Activated B cell treated with CpG ODN at 0.5 μM for 24 hours (primary cell): ENCODE measurements at regions of chr10 and their contacts with region 1.

Region 1: DNA sequence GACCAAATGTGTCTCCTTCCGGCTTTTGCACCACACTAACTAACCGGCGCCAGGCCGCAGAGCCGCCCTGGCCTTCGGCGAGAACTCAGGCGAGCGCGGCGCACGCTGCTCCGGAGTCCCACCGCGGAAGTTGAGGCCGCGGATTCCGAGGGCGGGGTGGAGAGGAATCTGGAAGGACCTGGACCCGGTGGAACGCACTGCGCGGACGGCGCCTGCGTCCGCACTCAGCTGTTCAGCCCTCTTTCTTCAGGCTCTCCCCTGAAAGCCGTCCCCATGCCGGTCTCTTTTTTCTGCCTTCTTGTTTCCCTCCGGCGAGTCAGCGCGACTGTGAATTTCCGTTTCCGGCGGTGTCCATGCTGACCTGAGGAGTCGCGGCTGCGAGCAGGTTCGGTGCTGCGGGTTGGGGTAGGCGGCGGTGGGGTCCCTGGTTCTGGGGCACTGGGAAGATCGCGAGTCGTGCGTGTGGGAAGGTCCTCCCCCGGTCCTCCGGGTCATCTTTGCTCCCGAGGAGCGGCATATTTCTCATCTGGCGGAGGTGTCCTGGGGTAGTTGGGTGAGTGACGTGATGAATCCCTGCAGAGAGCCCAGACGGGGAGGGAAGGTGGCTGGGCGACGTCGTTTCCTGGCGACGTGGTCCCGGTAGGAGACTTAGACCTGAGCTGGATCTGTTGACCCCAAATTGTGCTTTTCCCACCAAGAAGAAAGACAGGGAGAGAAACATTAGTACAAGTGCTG is at the start of gene BMS1:
- DNase-seq: peak; percentile 84
- ATAC-seq: peak; percentile 88
- H3K4me3 Mint-ChIP-seq: peak within 1 kb of the TSS; percentile 98
- H3K27ac Mint-ChIP-seq: peak within 1 kb of the TSS; percentile 89
- H3K4me1 Mint-ChIP-seq: peaks cover 21% of the 10 kb centered on the region
- H3K27me3 Mint-ChIP-seq: peaks cover 7% of the 10 kb centered on the region
- CTCF ChIP-seq: no peak
- total RNA-seq, gene BMS1: 24.6 and 25.1 TPM in 2 replicates

Region 2: DNA sequence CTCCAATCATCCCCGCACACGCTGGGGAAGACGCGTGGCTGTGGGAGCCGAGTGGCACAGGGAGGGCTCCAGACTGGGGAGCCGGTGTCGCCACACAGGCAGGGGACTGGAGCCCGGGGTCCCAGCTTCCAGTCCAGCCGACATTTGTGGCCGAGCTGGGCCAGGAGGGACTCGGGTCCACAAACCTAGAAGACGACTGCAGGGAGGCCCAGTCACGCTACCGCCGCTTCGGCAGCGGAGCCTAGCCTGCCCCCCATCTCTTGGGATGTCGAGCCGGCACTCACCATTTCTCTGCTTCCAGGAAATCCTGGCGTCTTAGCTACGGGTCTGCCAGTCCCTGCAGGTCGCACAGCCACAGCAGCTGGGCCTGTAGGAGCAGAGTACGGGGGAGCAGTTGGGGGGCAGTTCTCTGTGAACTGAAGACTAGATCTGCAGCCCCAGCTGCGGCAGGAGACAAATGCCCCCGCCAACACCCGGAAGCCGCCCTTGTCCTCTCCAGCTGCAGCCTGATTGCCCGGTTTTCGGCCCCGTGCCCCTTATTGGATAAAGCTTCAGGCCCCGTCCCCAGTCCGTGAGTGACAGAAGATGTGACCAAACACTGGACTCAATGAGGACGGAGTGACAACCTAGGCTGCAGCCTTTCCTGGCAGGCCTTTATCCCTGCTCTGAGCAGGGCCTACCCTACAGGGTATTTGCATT is 414.9 kb before region 1 on chr10:
- CTCF ChIA-PET with region 1: no interaction called
- POLR2A ChIA-PET with region 1: no interaction called
- intact Hi-C with region 1: loop called (anchors 1 kb)
- DNase-seq: peak; percentile 41
- ATAC-seq: peak; percentile 99
- H3K4me3 Mint-ChIP-seq: peak overlapping the region; percentile 87
- H3K27ac Mint-ChIP-seq: peak overlapping the region; percentile 61
- H3K4me1 Mint-ChIP-seq: peaks cover 4% of the 10 kb centered on the region
- H3K27me3 Mint-ChIP-seq: no peaks in the 10 kb centered on the region
- CTCF ChIP-seq: no peak

Region 3: GRCh38 chr10:42638055-42638820 is 144.4 kb before region 1 on chr10 and contains the start of gene ZNF33B:
- CTCF ChIA-PET with region 1: no interaction called
- POLR2A ChIA-PET with region 1: interaction called, 12 read pairs
- intact Hi-C with region 1: loop called (anchors 1 kb)
- DNase-seq: peak; percentile 88
- ATAC-seq: peak; percentile 96
- H3K4me3 Mint-ChIP-seq: peak within 1 kb of the TSS; percentile 96
- H3K27ac Mint-ChIP-seq: peak within 1 kb of the TSS; percentile 96
- H3K4me1 Mint-ChIP-seq: peaks cover 46% of the 10 kb centered on the region
- H3K27me3 Mint-ChIP-seq: no peaks in the 10 kb centered on the region
- CTCF ChIP-seq: no peak
- total RNA-seq, gene ZNF33B: 31.0 and 34.0 TPM in 2 replicates

Region 4: DNA sequence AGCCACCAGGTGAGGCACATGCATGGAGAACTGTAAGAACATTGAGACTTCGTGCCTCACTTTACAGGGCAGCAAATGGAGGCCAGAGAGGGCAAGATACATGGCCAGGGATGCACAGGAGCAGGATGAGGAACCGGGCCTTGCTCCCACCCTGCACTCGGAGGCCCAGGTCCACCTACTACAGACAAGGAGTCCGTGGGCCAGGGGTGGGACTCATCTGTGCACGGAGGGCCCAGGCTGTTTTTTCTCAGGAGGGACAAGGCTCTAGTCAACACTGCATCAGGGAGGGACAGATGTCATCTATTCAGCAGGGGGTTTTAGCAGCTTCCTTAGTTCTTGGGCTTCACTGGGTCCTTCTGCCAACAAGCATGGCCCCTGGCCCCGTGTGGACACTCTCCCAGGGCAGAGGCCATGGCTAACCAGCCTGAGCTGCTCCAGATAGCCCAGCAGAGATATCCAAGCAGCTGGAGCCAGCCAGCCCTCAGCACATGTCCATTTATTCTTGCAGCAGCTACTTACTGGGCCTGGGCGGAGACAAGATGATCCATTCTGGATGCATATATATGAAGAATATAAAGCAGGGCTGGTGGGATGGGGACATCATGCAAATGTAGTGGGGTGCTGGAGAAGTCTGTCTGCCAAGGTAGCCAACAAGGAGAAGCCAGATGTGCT is 159.8 kb after region 1 on chr10:
- CTCF ChIA-PET with region 1: no interaction called
- POLR2A ChIA-PET with region 1: no interaction called
- intact Hi-C with region 1: no loop called
- DNase-seq: no peak
- ATAC-seq: no peak
- H3K4me3 Mint-ChIP-seq: no peak overlapping the region
- H3K27ac Mint-ChIP-seq: no peak overlapping the region
- H3K4me1 Mint-ChIP-seq: no peaks in the 10 kb centered on the region
- H3K27me3 Mint-ChIP-seq: no peaks in the 10 kb centered on the region
- CTCF ChIP-seq: no peak

Region 5: GRCh38 chr10:43361986-43362839 is 579.6 kb after region 1 on chr10:
- CTCF ChIA-PET with region 1: no interaction called
- POLR2A ChIA-PET with region 1: no interaction called
- intact Hi-C with region 1: loop called (anchors 1 kb)
- DNase-seq: peak; percentile 86
- ATAC-seq: peak; percentile 98
- H3K4me3 Mint-ChIP-seq: peak overlapping the region; percentile 97
- H3K27ac Mint-ChIP-seq: peak overlapping the region; percentile 93
- H3K4me1 Mint-ChIP-seq: peaks cover 23% of the 10 kb centered on the region
- H3K27me3 Mint-ChIP-seq: no peaks in the 10 kb centered on the region
- CTCF ChIP-seq: no peak

Region 6: GRCh38 chr10:43453266-43453831 is 670.7 kb after region 1 on chr10:
- CTCF ChIA-PET with region 1: no interaction called
- POLR2A ChIA-PET with region 1: no interaction called
- intact Hi-C with region 1: loop called (anchors 1 kb)
- DNase-seq: no peak
- ATAC-seq: no peak
- H3K4me3 Mint-ChIP-seq: peak overlapping the region; percentile 69
- H3K27ac Mint-ChIP-seq: peak overlapping the region; percentile 98
- H3K4me1 Mint-ChIP-seq: peaks cover 44% of the 10 kb centered on the region
- H3K27me3 Mint-ChIP-seq: no peaks in the 10 kb centered on the region
- CTCF ChIP-seq: no peak